ENCODE measurements at regions of chr9 and their contacts with region 1.

Region 1: DNA sequence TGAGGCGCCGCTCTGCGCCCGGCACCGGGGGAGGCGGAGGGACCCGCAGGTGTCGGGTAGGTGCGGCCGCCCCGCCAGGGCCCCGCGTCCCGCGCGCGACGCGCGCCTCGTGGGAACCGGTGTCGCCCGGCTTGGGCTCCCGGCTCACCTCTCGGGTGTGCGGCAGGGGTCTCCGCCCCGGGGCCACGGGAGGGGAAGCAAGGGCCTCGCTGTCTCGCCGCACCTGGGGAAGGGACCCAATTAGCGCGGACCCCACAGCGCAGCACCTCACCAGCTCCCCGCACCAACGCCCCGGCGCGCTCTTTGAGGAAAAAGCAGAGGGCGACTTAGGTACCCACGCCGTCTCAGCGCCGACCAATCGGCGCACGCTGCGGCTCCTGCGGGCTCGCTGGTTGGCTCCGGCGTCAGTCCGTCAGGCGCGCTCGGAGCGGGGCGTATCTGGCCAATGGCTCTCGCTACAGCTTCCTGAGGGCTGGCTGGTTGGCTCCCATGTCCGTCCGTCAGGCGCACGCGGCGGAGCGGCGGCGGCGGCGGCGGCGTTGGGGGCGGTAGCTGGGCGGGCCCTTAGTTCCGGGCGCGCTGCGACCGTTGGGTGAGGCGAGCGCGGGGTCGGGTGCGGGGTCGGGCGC is at the start of gene TRAF2:
- DNase-seq: peak; percentile 97
- H3K4me3 Mint-ChIP-seq: peak within 1 kb of the TSS; percentile 86
- H3K27ac Mint-ChIP-seq: peak within 1 kb of the TSS; percentile 84
- H3K4me1 Mint-ChIP-seq: peaks cover 52% of the 10 kb centered on the region
- H3K27me3 Mint-ChIP-seq: no peaks in the 10 kb centered on the region
- total RNA-seq, gene TRAF2: 39.4 to 49.4 TPM

Region 2: DNA sequence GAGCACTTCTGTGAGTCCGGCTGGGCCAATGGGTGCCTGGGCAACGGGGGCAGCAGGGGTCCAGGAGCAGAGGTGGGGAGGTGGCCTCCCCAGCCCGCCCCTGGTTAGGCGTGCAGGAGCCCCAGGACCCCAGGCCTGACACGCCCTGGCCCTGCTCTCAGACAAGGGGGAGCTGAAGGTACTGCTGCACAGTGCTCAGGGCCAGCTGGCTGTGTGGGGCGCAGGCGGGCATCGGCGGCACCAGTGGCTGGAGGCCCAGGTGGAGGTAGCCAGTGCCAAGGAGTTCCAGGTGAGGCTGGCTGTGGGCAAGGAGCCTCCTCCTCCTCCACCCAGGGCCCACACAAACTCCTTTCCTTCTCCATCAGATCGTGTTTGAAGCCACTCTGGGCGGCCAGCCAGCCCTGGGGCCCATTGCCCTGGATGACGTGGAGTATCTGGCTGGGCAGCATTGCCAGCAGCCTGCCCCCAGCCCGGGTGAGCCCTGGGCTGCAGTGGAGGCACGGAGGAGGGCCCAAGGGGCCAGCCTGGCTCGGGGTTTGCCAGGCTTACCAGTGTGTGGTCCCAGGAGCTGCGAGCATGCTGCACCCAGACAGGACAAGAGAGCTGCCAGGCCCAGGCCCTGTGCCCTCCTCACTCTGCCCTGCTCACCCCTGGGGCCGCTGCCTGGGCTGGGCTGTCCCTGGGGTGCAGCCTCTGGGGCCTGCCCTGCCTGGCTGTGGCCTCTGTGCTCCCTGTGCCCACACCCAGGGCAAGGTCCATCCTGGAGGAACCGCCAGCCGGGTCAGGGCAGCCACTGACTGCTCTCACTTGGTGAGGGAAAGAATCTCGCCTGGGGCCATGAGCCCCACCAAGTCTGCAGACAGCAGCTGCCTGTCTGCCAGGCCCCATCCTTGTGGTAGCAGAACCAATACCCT is 27.0 kb before region 1 on chr9:
- CTCF ChIA-PET with region 1: interaction called, 12 read pairs
- POLR2A ChIA-PET with region 1: no interaction called
- DNase-seq: no peak
- H3K4me3 Mint-ChIP-seq: no peak overlapping the region
- H3K27ac Mint-ChIP-seq: no peak overlapping the region
- H3K4me1 Mint-ChIP-seq: peaks cover 4% of the 10 kb centered on the region
- H3K27me3 Mint-ChIP-seq: no peaks in the 10 kb centered on the region

Region 3: GRCh38 chr9:136902259-136902821 is 16.3 kb after region 1 on chr9:
- CTCF ChIA-PET with region 1: interaction called, 15 read pairs
- POLR2A ChIA-PET with region 1: no interaction called
- DNase-seq: peak; percentile 74
- H3K4me3 Mint-ChIP-seq: peak overlapping the region; percentile 63
- H3K27ac Mint-ChIP-seq: peak overlapping the region; percentile 95
- H3K4me1 Mint-ChIP-seq: peaks cover 39% of the 10 kb centered on the region
- H3K27me3 Mint-ChIP-seq: no peaks in the 10 kb centered on the region

Region 4: DNA sequence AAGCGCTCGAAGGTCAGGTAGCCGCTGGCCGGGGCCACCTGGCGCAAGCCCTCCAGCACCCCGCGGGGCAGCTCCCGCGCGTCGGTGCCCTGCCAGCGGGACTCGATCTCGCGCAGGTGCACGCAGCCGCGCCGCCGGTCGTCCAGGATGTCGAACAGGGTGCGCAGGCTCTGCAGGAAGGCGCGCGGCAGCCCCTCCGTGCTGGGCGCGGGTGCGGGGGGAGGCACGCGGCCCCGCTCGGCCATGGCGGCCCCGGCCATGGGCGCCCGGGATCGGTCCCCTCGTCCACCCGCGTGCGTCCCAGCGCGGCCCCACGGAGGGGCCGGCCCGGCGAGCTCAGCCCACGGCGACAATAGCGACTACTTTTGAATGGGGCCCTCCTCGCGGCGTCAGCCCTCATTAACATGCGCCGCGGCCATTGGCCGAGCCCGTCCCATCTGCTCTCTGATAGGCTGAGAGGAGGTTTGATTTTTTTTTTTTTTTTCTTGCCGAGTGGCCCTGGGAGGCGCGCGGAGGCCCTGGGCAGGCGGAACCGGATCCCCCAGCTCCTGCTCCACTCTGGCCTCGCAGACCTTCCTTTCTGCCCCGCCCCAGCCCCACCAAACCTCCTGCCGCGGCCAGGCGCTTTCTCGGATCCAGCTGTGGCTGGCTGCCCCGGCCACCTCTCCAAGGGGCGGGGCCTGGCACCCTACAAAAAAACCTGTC is 184.3 kb after region 1 on chr9 and contains the start of gene SAPCD2:
- CTCF ChIA-PET with region 1: no interaction called
- POLR2A ChIA-PET with region 1: no interaction called
- DNase-seq: peak; percentile 92
- H3K4me3 Mint-ChIP-seq: peak within 1 kb of the TSS; percentile 82
- H3K27ac Mint-ChIP-seq: peak within 1 kb of the TSS; percentile 91
- H3K4me1 Mint-ChIP-seq: peaks cover 28% of the 10 kb centered on the region
- H3K27me3 Mint-ChIP-seq: no peaks in the 10 kb centered on the region
- total RNA-seq, gene SAPCD2: 33.8 to 40.6 TPM

Measured in activated CD4-positive, alpha-beta T cell treated with anti-CD3 and anti-CD28 coated beads, Interleukin-2, amount 10 ng/mL, durations not matched to agents 7 days and 5 days (primary cell).